HCT116 (cell line): ENCODE measurements at regions of chr6 and their contacts with region 1.

Region 1: GRCh38 chr6:153231048-153231646 is 100.1 kb upstream of the RGS17 start:
- DNase-seq: peak; percentile 52
- ATAC-seq: peak; percentile 91
- H3K4me3 ChIP-seq: no peak overlapping the region
- H3K27ac ChIP-seq: no peak overlapping the region
- H3K4me1 ChIP-seq: no peaks in the 10 kb centered on the region
- H3K27me3 ChIP-seq: no peaks in the 10 kb centered on the region
- CTCF ChIP-seq: peak; percentile 89 to 98 (median 98)
- POLR2A ChIP-seq: no peak
- RAD21 ChIP-seq: peak; percentile 97

Region 2: DNA sequence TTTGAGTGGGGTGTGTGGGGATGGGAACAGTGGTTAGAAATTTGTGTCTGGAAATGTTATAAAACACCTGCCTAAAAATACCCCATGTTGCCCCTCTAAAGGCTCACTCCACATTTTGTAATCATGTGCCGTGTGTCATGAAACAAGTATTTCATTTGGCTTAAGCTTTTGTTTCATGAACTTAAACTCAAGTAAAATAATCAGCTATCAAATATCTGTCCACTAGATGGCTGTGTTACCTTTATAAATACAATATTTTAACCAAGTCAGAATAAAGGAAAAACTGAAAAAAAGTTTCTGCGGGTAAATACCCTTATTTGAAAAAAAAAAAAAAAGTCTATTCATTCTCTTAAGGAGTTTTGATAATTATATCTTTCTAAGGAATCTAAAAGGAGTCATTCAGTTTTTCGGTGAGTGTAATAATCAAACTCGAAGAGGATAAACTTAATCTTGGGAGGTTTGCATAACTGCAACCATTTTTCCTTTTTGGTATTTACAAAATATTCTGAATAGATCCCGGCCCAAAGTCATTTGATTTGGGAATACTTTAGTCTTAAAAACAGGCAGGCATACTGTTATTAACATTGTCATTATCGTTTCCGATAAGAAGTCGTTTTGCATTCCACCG is 198.8 kb before region 1 on chr6:
- CTCF ChIA-PET with region 1: interaction called, 13 read pairs
- POLR2A ChIA-PET with region 1: no interaction called
- RAD21 ChIA-PET with region 1: interaction called in 1 of 2 experiments, 4 read pairs
- intact Hi-C with region 1: loop called (anchors 2 kb)
- DNase-seq: peak; percentile 27
- ATAC-seq: peak; percentile 60; the same call in 1 of the 2 replicates
- H3K4me3 ChIP-seq: no peak overlapping the region
- H3K27ac ChIP-seq: no peak overlapping the region
- H3K4me1 ChIP-seq: no peaks in the 10 kb centered on the region
- H3K27me3 ChIP-seq: no peaks in the 10 kb centered on the region
- CTCF ChIP-seq: peak; percentile 24 to 61 (median 50); a peak in 3 of 6 replicates
- POLR2A ChIP-seq: no peak
- RAD21 ChIP-seq: peak; percentile 66

Region 3: GRCh38 chr6:153511896-153512496 is 280.8 kb after region 1 on chr6:
- CTCF ChIA-PET with region 1: interaction called, 4 read pairs
- POLR2A ChIA-PET with region 1: no interaction called
- RAD21 ChIA-PET with region 1: no interaction called
- intact Hi-C with region 1: loop called (anchors 1 kb)
- DNase-seq: peak; percentile 8
- ATAC-seq: peak; percentile 84
- H3K4me3 ChIP-seq: no peak overlapping the region
- H3K27ac ChIP-seq: no peak overlapping the region
- H3K4me1 ChIP-seq: no peaks in the 10 kb centered on the region; a peak in 1 of 4 replicates
- H3K27me3 ChIP-seq: 0 out of 2 replicates have a peak, but pooled peaks cover 5% of the 10 kb centered on the region
- CTCF ChIP-seq: peak; percentile 33 to 58 (median 43); a peak in 4 of 6 replicates
- POLR2A ChIP-seq: no peak
- RAD21 ChIP-seq: peak; percentile 56

Region 4: GRCh38 chr6:153790048-153790447 is 558.9 kb after region 1 on chr6:
- CTCF ChIA-PET with region 1: interaction called, 5 read pairs
- POLR2A ChIA-PET with region 1: no interaction called
- RAD21 ChIA-PET with region 1: no interaction called
- intact Hi-C with region 1: loop called (anchors 2 kb)
- DNase-seq: peak; percentile 19
- ATAC-seq: peak; percentile 72
- H3K4me3 ChIP-seq: no peak overlapping the region
- H3K27ac ChIP-seq: no peak overlapping the region
- H3K4me1 ChIP-seq: peaks cover 0 to 13% of the 10 kb centered on the region in 2 experiments; a peak in 3 of 4 replicates
- H3K27me3 ChIP-seq: no peaks in the 10 kb centered on the region
- CTCF ChIP-seq: peak in 2 of 3 experiments; percentile 36 to 39; a peak in 3 of 6 replicates
- POLR2A ChIP-seq: no peak
- RAD21 ChIP-seq: no peak

Region 5: DNA sequence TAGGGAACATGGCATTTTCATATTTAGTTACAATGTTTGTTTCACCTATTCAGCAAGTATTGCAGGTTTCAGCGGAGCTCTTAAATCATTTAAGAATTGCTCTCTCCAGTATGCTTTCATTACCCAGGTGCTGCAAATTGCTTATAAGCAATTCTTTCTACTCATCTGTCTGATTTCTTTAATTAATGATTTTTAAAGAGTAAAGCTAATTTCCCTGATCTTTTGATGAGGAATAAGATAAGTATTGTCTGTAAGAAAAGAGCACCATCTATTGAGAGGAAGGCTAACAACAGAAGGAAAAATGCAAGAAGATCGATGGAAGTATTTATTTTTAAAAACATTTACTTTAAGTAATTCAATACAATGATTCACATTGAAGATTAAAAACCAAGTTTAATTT is 809.9 kb after region 1 on chr6:
- CTCF ChIA-PET with region 1: interaction called, 5 read pairs
- POLR2A ChIA-PET with region 1: no interaction called
- RAD21 ChIA-PET with region 1: no interaction called
- intact Hi-C with region 1: loop called (anchors 10 kb)
- DNase-seq: no peak
- ATAC-seq: no peak
- H3K4me3 ChIP-seq: no peak overlapping the region
- H3K27ac ChIP-seq: no peak overlapping the region
- H3K4me1 ChIP-seq: no peaks in the 10 kb centered on the region
- H3K27me3 ChIP-seq: peaks cover 7% of the 10 kb centered on the region
- CTCF ChIP-seq: no peak
- POLR2A ChIP-seq: no peak
- RAD21 ChIP-seq: peak; percentile 36